Sigmoid colon (tissue), 7 donors: ENCODE measurements at regions of chr9 and their contacts with region 1.

Region 1: DNA sequence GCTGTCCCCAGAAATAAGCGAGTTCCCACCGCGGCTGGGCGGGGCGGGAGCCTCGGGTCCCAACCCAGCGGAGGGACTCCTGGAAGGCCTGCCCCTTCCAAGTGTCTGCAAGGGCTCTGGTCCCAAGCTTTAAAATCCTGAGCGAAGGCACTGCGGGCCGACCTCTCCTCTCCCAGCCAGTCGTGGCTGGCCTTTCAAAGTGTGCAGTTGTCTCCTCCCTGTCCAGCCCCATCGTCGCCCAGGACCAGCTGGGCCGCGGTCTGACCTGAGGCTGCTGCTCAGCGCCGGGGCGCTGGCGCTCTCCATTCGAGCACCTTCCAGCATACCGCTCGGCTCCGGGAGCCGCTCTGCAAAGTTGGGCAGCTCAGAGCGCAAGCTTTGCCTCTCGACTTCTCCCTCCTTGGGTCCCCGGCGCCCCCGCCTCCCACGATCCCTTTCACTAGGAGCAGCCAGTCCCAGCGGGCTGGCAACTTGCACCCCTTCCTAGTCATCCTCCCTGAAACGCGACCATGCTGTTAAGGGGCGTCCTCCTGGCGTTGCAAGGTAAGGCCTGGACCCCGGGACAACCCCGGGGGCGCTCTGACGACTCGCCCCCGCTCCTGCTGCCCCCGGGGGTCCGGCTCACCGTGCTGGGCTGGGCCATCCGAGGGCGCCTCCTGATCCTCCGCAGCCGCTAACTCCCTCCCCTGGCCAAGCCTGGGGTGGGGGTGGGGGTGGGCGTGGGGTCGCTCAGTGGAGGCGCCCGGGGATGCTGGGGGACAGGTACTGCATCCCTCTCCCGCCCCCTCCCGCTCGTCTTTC is at the start of gene MAMDC2:
- DNase-seq: peak; percentile 91
- H3K4me3 ChIP-seq: peak within 1 kb of the TSS; percentile 61 to 84 (median 76)
- H3K27ac ChIP-seq: peak within 1 kb of the TSS; percentile 87 to 98 (median 93)
- H3K4me1 ChIP-seq: peaks cover 0 to 80% (median 73%) of the 10 kb centered on the region in 4 donors
- H3K27me3 ChIP-seq: no peaks in the 10 kb centered on the region
- CTCF ChIP-seq: no peak
- EP300 ChIP-seq: no peak
- POLR2A ChIP-seq: peak; percentile 65 to 74
- total RNA-seq, gene MAMDC2: 89.9 to 167 (median 137) TPM

Region 2: GRCh38 chr9:70080481-70081119 is 36.7 kb after region 1 on chr9:
- intact Hi-C with region 1: loop called (anchors 5 kb)
- DNase-seq: peak; percentile 78
- H3K4me3 ChIP-seq: no peak overlapping the region
- H3K27ac ChIP-seq: peak overlapping the region; percentile 85 to 98 (median 89)
- H3K4me1 ChIP-seq: peaks cover 0 to 100% (median 91%) of the 10 kb centered on the region in 4 donors
- H3K27me3 ChIP-seq: no peaks in the 10 kb centered on the region
- CTCF ChIP-seq: no peak
- EP300 ChIP-seq: peak in 1 of 4 donors; percentile 17
- POLR2A ChIP-seq: no peak

Region 3: GRCh38 chr9:70111042-70111602 is 67.2 kb after region 1 on chr9:
- intact Hi-C with region 1: loop called (anchors 2 kb)
- DNase-seq: peak; percentile 94
- H3K4me3 ChIP-seq: no peak overlapping the region
- H3K27ac ChIP-seq: peak overlapping the region; percentile 42 to 72 (median 65)
- H3K4me1 ChIP-seq: peaks cover 0 to 68% (median 52%) of the 10 kb centered on the region in 4 donors
- H3K27me3 ChIP-seq: no peaks in the 10 kb centered on the region
- CTCF ChIP-seq: peak; percentile 50 to 90 (median 86)
- EP300 ChIP-seq: peak in 1 of 4 donors; percentile 20
- POLR2A ChIP-seq: no peak

Region 4: GRCh38 chr9:70600506-70600905 is 556.6 kb after region 1 on chr9:
- intact Hi-C with region 1: no loop called
- DNase-seq: peak; percentile 82
- H3K4me3 ChIP-seq: no peak overlapping the region
- H3K27ac ChIP-seq: peak overlapping the region; percentile 80 to 98 (median 89)
- H3K4me1 ChIP-seq: peaks cover 0 to 35% (median 28%) of the 10 kb centered on the region in 4 donors
- H3K27me3 ChIP-seq: no peaks in the 10 kb centered on the region
- CTCF ChIP-seq: no peak
- EP300 ChIP-seq: no peak
- POLR2A ChIP-seq: no peak